Cardiac septum (tissue), 1 donor: ENCODE measurements at regions of chr10 and their contacts with region 1.

Region 1: DNA sequence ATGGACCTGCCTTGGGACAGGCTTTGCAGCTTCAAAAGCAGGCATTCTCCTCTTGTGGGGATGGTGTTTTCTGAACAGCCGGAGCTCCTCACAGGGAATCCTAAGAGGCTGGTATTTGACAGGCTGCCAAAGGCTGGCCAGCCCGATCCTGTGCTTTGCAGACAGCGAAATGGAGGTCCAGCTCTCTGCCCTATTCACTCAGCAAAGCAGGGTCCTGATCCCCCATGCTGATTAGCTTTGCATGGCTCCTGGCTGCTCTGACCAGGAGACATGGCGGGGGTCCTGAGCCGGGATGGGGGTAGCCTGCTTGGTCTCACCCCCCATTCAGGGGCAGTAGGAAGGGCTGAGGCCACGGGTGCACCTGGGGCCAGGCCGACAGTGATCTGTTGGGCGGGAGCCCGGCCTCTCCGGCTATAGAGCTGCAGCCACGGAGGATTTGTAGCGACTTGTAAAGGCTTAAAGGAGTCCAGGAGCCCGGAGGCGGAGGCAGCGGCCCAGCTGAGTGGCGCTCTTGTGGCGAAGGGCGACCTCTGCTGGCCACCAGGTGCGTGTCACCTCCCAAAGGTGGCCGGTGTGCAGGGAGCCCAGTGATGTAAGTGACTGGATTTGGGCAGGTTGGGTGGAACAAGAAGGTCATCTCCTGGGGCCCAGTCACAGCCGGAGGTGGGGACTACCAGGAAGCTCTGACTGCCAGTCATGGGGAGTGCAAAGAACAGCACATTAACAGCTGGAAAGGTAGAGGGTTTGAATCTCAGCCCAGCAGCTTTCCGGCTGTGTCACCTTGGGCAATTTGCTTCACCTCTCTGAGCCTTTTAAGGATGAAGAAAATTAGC is 126.5 kb downstream of the ZMIZ1 start:
- DNase-seq: peak; percentile 92

Region 2: GRCh38 chr10:78039743-78040142 is 1155.6 kb before region 1 on chr10:
- intact Hi-C with region 1: no loop called
- DNase-seq: no peak

Region 3: DNA sequence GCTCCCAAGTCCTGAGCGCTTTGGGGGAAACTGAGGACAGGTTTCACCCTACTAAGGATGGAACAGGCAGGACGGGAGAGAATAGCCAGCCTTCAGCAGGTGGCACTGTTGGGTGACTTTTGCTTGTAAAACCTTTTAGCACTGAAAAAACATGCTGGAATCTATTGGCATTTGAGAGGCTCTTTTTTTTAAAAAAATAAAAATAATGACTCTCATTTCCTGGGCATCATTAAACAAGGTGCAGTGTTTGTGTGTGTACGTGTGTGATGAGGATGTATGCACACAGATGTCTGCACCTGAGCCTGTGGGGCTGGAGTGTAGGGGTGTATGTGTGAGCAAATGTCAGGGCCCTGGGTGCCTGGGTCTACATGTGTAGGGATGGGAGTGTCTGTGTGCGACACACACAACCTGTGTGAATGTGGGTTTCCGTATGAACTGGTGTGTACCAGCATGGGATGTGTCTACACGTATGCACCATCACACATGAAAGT is 983.7 kb before region 1 on chr10:
- intact Hi-C with region 1: loop called (anchors 5 kb)
- DNase-seq: no peak

Region 4: DNA sequence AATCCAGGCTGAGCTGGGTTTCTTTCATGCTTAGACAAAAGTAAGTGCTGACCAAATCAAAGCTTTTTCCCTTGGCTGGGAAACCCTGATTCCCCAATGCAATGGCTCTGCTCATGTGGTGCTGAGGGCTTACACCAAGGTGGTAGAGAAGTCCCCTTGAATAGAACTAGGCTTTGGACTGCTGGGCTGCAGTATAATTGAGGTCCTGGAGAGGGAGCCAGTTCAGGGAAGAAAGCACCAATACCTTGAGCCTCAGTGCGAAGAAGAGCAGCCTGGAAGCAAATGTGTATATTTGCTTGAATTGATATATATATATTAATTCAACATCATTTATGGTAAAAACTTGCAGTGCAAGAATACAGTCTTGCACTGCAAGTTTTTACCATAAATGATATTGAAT is 770.6 kb before region 1 on chr10:
- intact Hi-C with region 1: loop called (anchors 10 kb)
- DNase-seq: no peak

Region 5: DNA sequence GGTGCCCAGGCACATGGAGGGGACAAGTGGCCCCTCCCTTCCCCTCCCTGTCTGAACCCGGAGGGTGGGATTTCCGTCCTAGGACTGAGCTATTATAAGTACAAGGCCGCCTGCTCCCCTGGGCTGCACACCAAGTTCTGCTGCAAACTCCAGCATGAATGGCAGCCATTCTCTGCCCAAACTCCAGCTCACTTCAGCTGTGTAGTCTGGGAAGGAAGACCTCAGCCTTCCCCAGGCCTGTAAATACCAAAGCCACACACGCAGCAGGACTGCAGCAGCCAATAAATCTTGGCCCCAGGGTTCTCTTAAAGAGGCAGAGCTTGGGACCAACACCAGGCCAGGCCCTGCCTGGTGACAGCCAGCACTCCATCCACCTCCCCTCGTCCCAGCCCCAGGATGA is 417.8 kb before region 1 on chr10:
- intact Hi-C with region 1: loop called (anchors 10 kb)
- DNase-seq: peak; percentile 79